Breast epithelium (tissue), 4 donors: ENCODE measurements at regions of chrX and their contacts with region 1.

Region 1: DNA sequence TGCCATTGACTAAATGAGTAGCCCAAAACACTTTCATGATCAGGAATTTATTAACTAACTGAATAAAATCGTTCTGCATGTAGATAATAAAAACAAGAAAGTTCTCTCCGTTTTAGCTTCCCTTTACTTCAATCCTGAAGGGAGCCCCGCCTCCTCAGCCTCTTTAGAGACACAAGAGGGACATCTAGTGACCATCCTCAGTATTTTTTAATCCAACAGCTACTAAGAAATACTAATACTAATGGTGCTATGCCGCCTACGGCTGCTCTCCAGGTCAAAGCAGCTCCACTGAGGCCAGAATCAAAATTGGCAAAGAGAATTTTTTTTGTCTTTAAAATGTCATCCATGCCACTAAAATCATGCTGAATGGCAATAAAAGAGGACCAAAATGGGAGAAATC is 3.2 kb upstream of the PCDH19 start:
- DNase-seq: no peak
- H3K4me3 ChIP-seq: no peak overlapping the region
- H3K27ac ChIP-seq: no peak overlapping the region
- H3K4me1 ChIP-seq: no peaks in the 10 kb centered on the region
- H3K27me3 ChIP-seq: peaks cover 3 to 75% of the 10 kb centered on the region in 2 donors
- CTCF ChIP-seq: peak in 2 of 3 donors; percentile 40 to 43
- POLR2A ChIP-seq: no peak

Region 2: DNA sequence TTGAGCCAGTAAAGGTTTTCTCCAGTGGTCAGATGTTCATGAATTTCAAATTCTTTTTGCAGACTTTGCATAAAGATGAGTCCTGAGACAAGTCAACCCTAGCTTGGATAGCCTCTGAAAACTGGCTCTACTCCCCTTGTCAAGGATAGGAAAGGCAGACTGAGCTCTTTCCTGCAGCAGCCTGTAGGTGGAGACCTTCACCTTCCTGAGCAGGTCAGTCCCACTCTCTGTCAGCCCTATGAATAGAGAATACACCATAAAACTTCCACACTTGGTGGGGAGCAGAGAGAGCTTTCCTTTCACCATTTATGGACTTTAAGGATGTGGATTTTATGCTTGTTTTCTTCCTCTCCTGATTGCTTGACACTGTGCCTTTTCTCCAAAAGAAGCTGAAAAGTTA is 45.1 kb before region 1 on chrX:
- intact Hi-C with region 1: loop called (anchors 2 kb)
- DNase-seq: no peak
- H3K4me3 ChIP-seq: no peak overlapping the region
- H3K27ac ChIP-seq: no peak overlapping the region
- H3K4me1 ChIP-seq: no peaks in the 10 kb centered on the region
- H3K27me3 ChIP-seq: peaks cover 0 to 46% of the 10 kb centered on the region in 2 donors
- CTCF ChIP-seq: no peak
- POLR2A ChIP-seq: no peak